ENCODE measurements at regions of chr1 and their contacts with region 1.

Region 1: GRCh38 chr1:32215629-32216480 is 6.3 kb downstream of the TMEM234 start:
- DNase-seq: no peak
- H3K4me3 ChIP-seq: no peak overlapping the region
- H3K27me3 ChIP-seq: no peaks in the 10 kb centered on the region
- CTCF ChIP-seq: peak; percentile 90

Region 2: GRCh38 chr1:31920956-31921355 is 294.9 kb before region 1 on chr1:
- CTCF ChIA-PET with region 1: no interaction called
- POLR2A ChIA-PET with region 1: no interaction called
- DNase-seq: no peak
- H3K4me3 ChIP-seq: no peak overlapping the region
- H3K27me3 ChIP-seq: no peaks in the 10 kb centered on the region
- CTCF ChIP-seq: no peak

Region 3: DNA sequence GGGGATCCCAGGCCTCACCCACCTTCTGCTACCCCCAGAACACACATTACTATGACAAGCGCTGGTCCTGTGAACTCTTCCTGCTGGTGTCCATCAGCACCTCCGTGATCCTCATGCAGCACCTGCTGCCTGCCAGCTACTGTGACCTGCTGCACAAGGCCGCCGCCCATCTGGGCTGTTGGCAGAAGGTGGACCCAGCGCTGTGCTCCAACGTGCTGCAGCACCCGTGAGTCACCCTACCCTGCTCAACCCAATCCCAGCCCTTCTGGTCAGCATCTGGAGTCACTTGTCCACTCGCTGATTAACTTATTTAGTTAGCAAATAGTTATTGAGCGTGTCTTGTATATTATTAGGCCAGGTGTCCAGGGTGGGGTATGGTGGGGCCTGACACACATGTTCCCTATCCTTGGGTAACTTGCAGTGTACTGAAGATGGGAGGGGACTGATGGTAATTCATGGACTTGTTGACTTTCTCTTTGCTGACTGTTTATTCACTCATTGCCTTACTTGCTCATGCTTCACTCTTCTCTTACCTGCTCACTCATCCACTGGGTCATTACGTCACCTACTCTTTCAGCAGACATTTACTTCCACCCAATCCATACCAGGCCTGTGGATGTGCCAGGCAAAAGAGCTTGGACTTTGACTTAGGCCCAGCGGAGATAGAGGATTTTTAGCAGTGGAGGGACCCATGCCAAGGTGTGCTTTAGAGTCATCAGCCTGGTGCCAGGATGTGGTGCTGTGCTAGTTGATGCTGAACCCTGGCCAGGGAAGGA is 120.9 kb before region 1 on chr1:
- CTCF ChIA-PET with region 1: no interaction called
- POLR2A ChIA-PET with region 1: no interaction called
- DNase-seq: no peak
- H3K4me3 ChIP-seq: no peak overlapping the region
- H3K27me3 ChIP-seq: no peaks in the 10 kb centered on the region
- CTCF ChIP-seq: no peak

Region 4: DNA sequence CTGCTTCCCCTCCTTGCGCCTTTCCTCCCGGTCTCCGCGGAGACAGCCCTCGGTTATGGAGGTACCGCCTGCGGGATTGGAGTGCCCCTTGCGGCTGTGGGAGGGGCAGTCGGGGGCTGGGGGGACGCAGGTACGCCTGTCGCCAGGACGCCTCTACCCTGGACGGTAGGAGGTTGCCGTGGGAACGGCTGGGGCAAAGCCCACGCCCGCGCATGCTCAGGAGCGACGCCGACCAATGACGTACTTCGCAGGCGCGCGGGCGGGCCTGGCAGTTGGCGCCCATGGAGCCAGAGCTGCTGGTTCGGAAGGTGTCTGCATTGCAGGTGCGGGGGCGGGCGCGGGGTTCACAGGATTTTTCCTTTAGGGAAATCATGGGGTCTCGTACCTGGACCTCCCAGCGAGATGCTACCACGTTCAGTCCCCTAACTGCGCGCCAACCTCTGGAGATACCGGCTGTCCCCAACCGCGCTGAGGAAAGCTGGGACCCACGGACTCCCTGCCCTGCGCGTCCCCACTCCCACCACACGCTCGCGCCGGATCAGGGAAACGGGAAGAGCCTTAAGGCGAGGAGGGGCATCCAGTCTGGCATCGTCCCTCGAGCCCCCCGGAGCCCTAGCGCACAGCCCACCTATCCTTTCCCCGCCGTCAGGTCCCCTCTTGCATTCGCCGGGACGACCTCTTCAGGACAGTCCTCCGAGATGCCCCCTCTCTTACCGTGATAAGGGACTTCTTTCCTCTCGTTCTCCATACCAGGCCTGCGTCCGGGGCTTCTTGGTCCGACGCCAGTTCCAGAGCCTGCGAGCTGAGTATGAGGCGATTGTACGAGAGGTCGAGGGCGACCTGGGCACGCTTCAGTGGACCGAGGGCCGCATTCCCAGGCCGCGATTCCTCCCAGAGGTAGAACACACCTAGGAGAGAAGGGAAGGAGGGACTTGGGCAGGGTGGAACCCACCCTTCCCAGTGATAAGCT is 10.2 kb before region 1 on chr1 and contains the start of gene IQCC:
- CTCF ChIA-PET with region 1: interaction called, 18 read pairs
- POLR2A ChIA-PET with region 1: interaction called, 5 read pairs
- DNase-seq: no peak
- H3K4me3 ChIP-seq: peak within 1 kb of the TSS; percentile 74
- H3K27me3 ChIP-seq: no peaks in the 10 kb centered on the region
- CTCF ChIP-seq: no peak
- polyA plus RNA-seq, gene IQCC: 1.4 and 2.1 TPM in 2 replicates

Region 5: DNA sequence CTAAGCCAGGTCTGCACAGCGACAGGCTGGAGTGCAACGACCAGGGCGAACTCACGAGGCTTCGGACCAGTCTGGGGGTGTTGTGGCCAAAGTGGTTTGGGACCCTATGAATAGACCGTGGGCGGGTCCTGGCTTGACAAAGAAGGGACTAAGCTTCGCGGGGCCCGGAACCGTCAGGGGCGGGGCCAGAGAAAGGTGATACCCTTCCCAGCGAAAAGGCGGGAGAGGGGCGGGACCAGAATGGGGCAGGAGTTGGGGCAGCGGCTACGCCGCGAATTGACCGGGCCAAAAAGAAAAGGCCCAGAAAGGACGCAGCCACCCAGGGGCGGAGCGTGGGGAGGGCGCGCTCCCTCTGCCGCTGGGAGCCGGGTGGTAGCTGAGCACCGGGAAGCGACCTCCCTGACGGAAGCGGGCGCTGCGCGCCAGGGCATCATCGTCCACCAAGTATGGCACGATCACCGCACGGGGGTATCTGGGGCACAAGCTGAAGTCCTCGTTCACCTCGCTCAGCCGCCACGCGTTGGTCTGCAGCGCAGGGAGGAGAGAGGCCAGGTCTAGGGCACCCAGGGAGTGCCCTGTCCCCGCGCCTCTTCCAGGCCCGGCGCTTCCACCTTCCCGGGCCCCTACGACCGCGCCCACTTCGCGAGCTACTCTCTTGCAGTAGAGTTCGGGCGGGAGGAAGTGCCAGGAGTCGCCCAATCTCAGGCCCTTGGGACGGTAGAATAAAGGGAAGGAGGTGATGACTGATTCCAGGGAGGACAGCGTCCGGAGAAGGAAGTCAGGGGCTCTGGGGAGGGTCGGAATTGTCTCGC is 24.5 kb after region 1 on chr1:
- CTCF ChIA-PET with region 1: interaction called, 35 read pairs
- POLR2A ChIA-PET with region 1: interaction called, 7 read pairs
- DNase-seq: no peak
- H3K4me3 ChIP-seq: peak overlapping the region; percentile 59
- H3K27me3 ChIP-seq: no peaks in the 10 kb centered on the region
- CTCF ChIP-seq: peak; percentile 47

Region 6: GRCh38 chr1:32316903-32317277 is 101.0 kb after region 1 on chr1:
- CTCF ChIA-PET with region 1: interaction called, 10 read pairs
- POLR2A ChIA-PET with region 1: no interaction called
- DNase-seq: no peak
- H3K4me3 ChIP-seq: no peak overlapping the region
- H3K27me3 ChIP-seq: no peaks in the 10 kb centered on the region
- CTCF ChIP-seq: no peak

Region 7: GRCh38 chr1:32361674-32362473 is 146.0 kb after region 1 on chr1:
- CTCF ChIA-PET with region 1: interaction called, 12 read pairs
- POLR2A ChIA-PET with region 1: no interaction called
- DNase-seq: no peak
- H3K4me3 ChIP-seq: peak overlapping the region; percentile 36
- H3K27me3 ChIP-seq: no peaks in the 10 kb centered on the region
- CTCF ChIP-seq: peak; percentile 29

Region 8: DNA sequence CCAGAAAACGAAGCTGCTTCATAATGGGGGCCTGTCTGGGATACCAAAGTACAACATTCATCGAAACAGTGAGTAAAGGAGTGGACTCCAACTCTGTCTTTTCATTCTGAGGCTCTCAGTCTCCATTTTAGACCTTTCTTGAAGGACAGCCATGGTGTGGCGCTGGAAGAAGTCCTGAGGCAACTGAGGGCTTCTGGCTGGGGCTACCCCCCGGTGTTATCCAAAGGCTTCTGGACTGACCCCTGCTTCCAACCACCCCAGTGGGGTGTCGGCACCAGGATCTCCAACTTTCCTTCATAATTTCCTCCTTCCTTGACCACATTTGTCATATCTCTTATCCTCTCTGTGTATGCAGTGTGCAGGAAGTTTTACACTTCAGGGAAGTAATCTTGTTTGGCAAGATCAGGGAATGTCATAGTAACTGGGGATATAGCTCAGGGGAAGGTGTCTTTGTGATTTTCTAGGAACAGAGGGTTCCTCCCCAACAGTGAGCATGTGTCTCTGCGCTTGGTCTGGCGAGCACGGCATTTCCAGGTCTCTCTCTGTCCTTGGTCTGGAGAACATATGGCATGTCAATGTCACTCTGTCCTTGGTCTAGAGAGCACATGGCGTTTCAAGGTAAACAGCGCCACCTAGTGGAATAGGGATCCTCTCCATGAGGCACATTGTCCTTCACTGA is 197.8 kb after region 1 on chr1:
- CTCF ChIA-PET with region 1: interaction called, 22 read pairs
- POLR2A ChIA-PET with region 1: no interaction called
- DNase-seq: no peak
- H3K4me3 ChIP-seq: no peak overlapping the region
- H3K27me3 ChIP-seq: peaks cover 6% of the 10 kb centered on the region
- CTCF ChIP-seq: peak; percentile 78